Gastrocnemius medialis (tissue), 4 donors: ENCODE measurements at regions of chr17 and their contacts with region 1.

Region 1: GRCh38 chr17:46159686-46160085 is 33.5 kb downstream of the KANSL1 start:
- DNase-seq: no peak
- ATAC-seq: peak; percentile 75 to 92
- H3K4me3 ChIP-seq: no peak overlapping the region
- H3K27ac ChIP-seq: peak overlapping the region; percentile 32 to 50 (median 48)
- H3K4me1 ChIP-seq: peaks cover 86 to 94% of the 10 kb centered on the region in 2 donors
- H3K27me3 ChIP-seq: no peaks in the 10 kb centered on the region
- CTCF ChIP-seq: no peak
- POLR2A ChIP-seq: no peak

Region 2: GRCh38 chr17:45990886-45991285 is 168.8 kb before region 1 on chr17:
- in situ Hi-C with region 1: no loop called
- intact Hi-C with region 1: no loop called
- DNase-seq: no peak
- ATAC-seq: no peak
- H3K4me3 ChIP-seq: no peak overlapping the region
- H3K27ac ChIP-seq: no peak overlapping the region
- H3K4me1 ChIP-seq: no peaks in the 10 kb centered on the region
- H3K27me3 ChIP-seq: no peaks in the 10 kb centered on the region
- CTCF ChIP-seq: no peak
- POLR2A ChIP-seq: no peak

Region 3: DNA sequence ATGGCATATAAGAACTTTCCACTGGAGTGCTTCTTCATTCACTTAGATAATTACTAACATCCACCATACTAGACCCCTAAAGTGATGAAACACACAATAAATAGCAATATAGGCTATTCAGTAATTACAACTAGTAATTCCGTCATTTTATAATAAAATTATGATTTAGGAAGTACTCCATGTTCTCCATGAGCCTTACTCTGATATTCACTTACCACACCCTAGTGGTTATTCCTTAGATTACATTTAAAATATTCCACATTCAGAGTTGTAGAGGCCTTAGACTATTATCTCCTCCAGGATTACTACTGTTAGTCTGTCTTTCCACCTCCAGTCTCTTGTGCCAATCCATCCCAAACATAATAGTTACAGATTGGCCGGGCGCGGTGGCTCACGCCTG is 98.3 kb before region 1 on chr17:
- in situ Hi-C with region 1: no loop called
- intact Hi-C with region 1: loop called (anchors 5 kb)
- DNase-seq: no peak
- ATAC-seq: no peak
- H3K4me3 ChIP-seq: no peak overlapping the region
- H3K27ac ChIP-seq: peak overlapping the region in 3 of 4 donors; percentile 16 to 41 (median 20)
- H3K4me1 ChIP-seq: peaks cover 32 to 38% of the 10 kb centered on the region in 2 donors
- H3K27me3 ChIP-seq: no peaks in the 10 kb centered on the region
- CTCF ChIP-seq: peak in 1 of 5 experiments; percentile 31
- POLR2A ChIP-seq: no peak

Region 4: GRCh38 chr17:46108550-46109110 is 51.1 kb before region 1 on chr17:
- in situ Hi-C with region 1: no loop called
- intact Hi-C with region 1: loop called (anchors 5 kb)
- DNase-seq: peak in 1 of 2 donors; percentile 54
- ATAC-seq: peak; percentile 78 to 89
- H3K4me3 ChIP-seq: no peak overlapping the region
- H3K27ac ChIP-seq: peak overlapping the region; percentile 56 to 76 (median 62)
- H3K4me1 ChIP-seq: peaks cover 59 to 65% of the 10 kb centered on the region in 2 donors
- H3K27me3 ChIP-seq: no peaks in the 10 kb centered on the region
- CTCF ChIP-seq: no peak
- POLR2A ChIP-seq: no peak